PC-3 (cell line): ENCODE measurements at regions of chr14 and their contacts with region 1.

Region 1: GRCh38 chr14:67619446-67620216 is at the start of gene ARG2:
- DNase-seq: peak; percentile 95
- ATAC-seq: peak; percentile 84
- H3K4me3 ChIP-seq: peak within 1 kb of the TSS; percentile 77
- H3K27ac ChIP-seq: no peak within 1 kb of the TSS
- H3K4me1 ChIP-seq: peaks cover 31% of the 10 kb centered on the region
- H3K27me3 ChIP-seq: no peaks in the 10 kb centered on the region
- CTCF ChIP-seq: peak; percentile 32; the same call in 1 of the 2 replicates
- total RNA-seq, gene ARG2: 1.1 and 1.7 TPM in 2 replicates

Region 2: DNA sequence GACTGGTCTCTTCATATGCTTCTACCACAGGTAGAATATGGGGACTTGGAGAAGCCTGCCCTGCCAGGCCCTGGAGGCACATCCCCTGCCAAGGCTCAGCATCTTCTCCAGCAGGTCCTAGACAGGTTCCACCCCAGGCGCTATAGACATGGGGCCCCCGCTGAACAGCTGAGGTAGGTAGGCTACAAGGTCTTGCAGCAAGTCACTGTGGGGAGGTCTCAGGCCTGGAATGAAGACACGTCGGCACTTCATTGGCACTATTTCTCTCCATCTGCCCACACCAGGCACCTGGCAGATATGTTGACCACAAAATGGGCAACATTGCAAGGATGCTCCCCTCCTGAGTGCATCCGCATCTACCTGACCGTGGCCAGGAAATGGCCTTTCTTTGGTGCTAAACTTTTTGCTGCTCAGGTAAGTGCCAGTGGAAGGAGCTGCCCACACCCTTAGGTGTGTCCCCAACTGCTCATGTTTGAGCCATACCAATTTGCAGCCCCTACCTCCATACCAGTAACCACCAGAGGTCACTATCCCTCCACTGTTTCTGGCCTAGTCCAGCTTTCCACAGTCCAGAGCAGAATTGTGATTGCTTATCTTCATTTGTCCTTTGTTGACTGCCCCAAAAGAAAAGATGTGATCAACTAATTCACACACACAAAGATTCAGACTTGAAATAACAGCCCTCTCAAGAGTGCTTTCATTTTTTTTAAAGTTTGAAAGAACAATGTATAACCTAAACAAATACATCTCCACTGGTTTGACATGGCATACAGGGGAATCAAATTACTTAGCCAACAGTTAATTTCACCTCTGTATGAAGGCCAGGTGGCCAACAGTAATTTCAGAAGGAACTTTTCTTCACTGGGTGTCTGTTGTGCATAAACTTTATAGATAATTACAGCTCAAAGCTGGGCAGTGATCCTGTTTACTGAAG is 35.7 kb before region 1 on chr14:
- CTCF ChIA-PET with region 1: interaction called, 4 read pairs
- POLR2A ChIA-PET with region 1: no interaction called
- intact Hi-C with region 1: loop called (anchors 1 kb)
- DNase-seq: peak; percentile 72
- ATAC-seq: peak; percentile 99
- H3K4me3 ChIP-seq: no peak overlapping the region
- H3K27ac ChIP-seq: no peak overlapping the region
- H3K4me1 ChIP-seq: no peaks in the 10 kb centered on the region
- H3K27me3 ChIP-seq: no peaks in the 10 kb centered on the region
- CTCF ChIP-seq: peak; percentile 93

Region 3: GRCh38 chr14:67599698-67600561 is 19.7 kb before region 1 on chr14 and contains the start of gene PIGH:
- CTCF ChIA-PET with region 1: interaction called, 3 read pairs
- POLR2A ChIA-PET with region 1: interaction called, 9 read pairs
- intact Hi-C with region 1: loop called (anchors 1 kb)
- DNase-seq: peak; percentile 88
- ATAC-seq: peak; percentile 97
- H3K4me3 ChIP-seq: peak within 1 kb of the TSS; percentile 91
- H3K27ac ChIP-seq: peak within 1 kb of the TSS; percentile 39
- H3K4me1 ChIP-seq: peaks cover 14% of the 10 kb centered on the region; the same call in 1 of the 2 replicates
- H3K27me3 ChIP-seq: no peaks in the 10 kb centered on the region
- CTCF ChIP-seq: peak; percentile 63
- total RNA-seq, gene PIGH: 63.8 and 66.4 TPM in 2 replicates

Region 4: GRCh38 chr14:67666750-67667449 is 47.3 kb after region 1 on chr14:
- CTCF ChIA-PET with region 1: interaction called, 70 read pairs
- POLR2A ChIA-PET with region 1: interaction called, 7 read pairs
- intact Hi-C with region 1: loop called (anchors 1 kb)
- DNase-seq: peak; percentile 69
- ATAC-seq: peak; percentile 90
- H3K4me3 ChIP-seq: no peak overlapping the region
- H3K27ac ChIP-seq: no peak overlapping the region
- H3K4me1 ChIP-seq: no peaks in the 10 kb centered on the region
- H3K27me3 ChIP-seq: no peaks in the 10 kb centered on the region
- CTCF ChIP-seq: peak; percentile 86

Region 5: DNA sequence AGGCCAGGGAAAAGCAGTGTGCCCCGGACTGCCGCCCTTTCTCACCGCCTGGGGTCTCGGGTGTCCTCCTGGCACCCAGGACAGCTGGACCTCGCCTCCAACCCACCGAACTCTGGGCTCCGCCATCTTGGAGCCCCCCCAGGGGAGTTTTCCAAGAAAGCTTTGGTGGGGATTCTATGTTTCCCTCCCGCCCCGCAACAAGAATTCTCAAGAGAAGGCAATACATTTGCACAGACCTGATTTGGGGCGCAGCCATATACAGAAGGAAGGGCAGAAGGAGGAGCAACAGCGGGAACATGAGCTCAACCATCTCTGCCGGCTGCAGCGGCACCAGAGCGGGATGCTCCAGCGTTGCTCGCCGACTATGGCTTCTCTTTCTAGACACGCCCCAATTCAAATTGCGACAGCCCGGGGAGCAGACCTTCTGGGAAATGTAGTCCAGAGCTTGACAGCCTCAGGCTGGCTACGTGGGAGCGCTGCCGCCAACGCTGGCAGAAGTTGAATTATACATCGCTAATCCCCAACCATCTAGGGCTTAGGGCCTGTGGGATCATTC is 75.8 kb after region 1 on chr14 and contains the start of gene RDH11:
- CTCF ChIA-PET with region 1: interaction called, 7 read pairs
- POLR2A ChIA-PET with region 1: no interaction called
- intact Hi-C with region 1: loop called (anchors 1 kb)
- DNase-seq: peak; percentile 95
- ATAC-seq: peak; percentile 93
- H3K4me3 ChIP-seq: peak within 1 kb of the TSS; percentile 97
- H3K27ac ChIP-seq: peak within 1 kb of the TSS; percentile 93
- H3K4me1 ChIP-seq: peaks cover 16% of the 10 kb centered on the region
- H3K27me3 ChIP-seq: no peaks in the 10 kb centered on the region
- CTCF ChIP-seq: no peak
- total RNA-seq, gene RDH11: 103 and 125 TPM in 2 replicates

Region 6: DNA sequence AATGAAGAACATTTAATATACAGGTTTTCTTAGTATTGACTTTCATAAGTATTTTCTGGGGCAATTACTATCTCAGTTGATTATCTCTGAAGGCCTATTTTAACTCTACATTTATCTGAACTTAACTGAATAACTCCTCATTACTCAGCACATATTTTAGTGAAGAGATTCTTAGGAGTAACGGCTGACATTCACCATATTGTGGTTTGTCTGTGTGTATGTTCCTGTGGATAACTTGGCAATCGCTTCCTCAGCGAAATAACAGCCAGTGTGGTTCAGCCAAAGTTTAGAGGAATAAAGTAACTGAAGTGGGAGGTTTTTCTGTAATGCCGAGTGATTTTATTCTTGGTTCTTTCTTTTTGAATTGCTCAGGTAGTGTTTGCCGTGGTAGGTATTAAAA is 368.0 kb after region 1 on chr14:
- CTCF ChIA-PET with region 1: no interaction called
- POLR2A ChIA-PET with region 1: no interaction called
- intact Hi-C with region 1: no loop called
- DNase-seq: no peak
- ATAC-seq: no peak
- H3K4me3 ChIP-seq: no peak overlapping the region
- H3K27ac ChIP-seq: no peak overlapping the region
- H3K4me1 ChIP-seq: 0 out of 2 replicates have a peak, but pooled peaks cover 5% of the 10 kb centered on the region
- H3K27me3 ChIP-seq: no peaks in the 10 kb centered on the region
- CTCF ChIP-seq: no peak